ENCODE measurements at regions of chr2 and their contacts with region 1.

Region 1: GRCh38 chr2:219560037-219560892 is 11.1 kb downstream of the OBSL1 start:
- DNase-seq: no peak
- H3K4me3 Mint-ChIP-seq: no peak overlapping the region
- H3K27ac Mint-ChIP-seq: no peak overlapping the region
- H3K4me1 Mint-ChIP-seq: no peaks in the 10 kb centered on the region
- H3K27me3 Mint-ChIP-seq: peaks cover 9% of the 10 kb centered on the region

Region 2: DNA sequence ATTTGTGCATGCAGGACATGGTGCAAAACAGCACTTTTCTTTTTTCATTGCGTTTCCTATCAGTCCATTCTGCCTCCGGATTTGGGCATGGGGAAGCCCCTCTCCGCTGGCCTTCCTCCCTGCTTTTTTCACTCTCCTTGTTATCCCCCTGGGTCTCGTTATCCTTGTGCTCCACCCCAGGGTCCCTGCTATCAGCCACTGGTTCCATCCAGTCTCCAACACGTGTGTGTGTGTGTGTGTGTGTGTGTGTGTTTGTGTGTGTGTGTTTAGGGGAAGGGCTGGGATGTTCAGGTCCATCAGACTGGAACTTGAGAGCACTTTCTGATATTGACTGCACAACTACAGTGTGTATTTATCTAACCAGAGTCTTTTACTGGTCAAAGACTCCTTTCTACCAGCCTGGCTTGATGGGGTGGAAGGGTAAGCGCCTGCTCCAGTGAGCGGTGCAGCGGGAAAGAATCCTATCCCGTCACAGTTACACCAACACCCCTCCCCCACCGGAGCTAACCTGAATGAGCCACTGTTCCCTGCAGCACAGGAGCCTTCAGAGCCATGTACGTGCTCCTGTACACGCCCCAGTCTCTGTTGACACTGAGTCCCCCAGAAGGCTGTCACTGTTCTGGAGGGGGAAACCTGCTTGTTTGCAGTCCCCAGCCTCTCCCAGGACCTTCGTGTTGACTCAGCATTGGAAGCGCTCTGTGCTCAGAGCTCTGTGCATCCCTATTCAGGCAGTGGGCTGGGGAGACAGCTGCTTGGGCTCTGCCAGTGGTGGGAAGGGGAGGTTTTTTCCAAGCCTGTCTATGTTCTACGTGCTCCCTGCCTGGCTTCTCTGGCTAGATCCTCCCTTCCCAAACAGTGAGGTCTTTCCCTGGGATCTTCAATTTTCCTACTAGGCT is 16.5 kb after region 1 on chr2:
- CTCF ChIA-PET with region 1: interaction called, 11 read pairs
- intact Hi-C with region 1: no loop called
- DNase-seq: no peak
- H3K4me3 Mint-ChIP-seq: no peak overlapping the region
- H3K27ac Mint-ChIP-seq: no peak overlapping the region
- H3K4me1 Mint-ChIP-seq: no peaks in the 10 kb centered on the region
- H3K27me3 Mint-ChIP-seq: peaks cover 18% of the 10 kb centered on the region

Measured in activated naive CD4-positive, alpha-beta T cell treated with anti-CD3 and anti-CD28 coated beads for 36 hours (primary cell).